Calu3 (cell line): ENCODE measurements at regions of chr10 and their contacts with region 1.

Region 1: GRCh38 chr10:111076191-111076681 is 593 bp upstream of the ADRA2A start:
- DNase-seq: peak; percentile 71
- H3K4me3 Mint-ChIP-seq: peak overlapping the region; percentile 88
- H3K27ac Mint-ChIP-seq: no peak overlapping the region
- H3K4me1 Mint-ChIP-seq: peaks cover 7% of the 10 kb centered on the region
- H3K27me3 Mint-ChIP-seq: peaks cover 37% of the 10 kb centered on the region
- CTCF ChIP-seq: peak; percentile 75

Region 2: DNA sequence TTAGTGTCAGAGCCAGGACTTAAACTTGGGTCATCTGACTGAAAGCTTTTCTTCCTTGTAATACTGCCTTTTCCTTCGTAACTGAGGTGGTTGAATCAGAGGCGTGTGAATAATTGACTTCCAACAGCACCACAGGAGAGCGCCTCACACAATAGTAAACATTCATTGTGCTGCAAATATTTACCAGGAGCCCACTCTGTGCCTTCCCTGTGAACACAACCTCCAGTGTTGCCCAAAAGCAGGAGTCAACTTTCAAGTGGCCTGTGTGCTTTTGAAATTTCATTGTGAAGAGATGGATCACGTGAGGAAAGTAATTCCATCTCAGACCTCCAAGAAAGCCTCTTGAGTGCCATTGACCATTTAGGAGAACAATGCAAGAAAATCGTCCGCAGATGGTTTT is 60.8 kb after region 1 on chr10:
- CTCF ChIA-PET with region 1: interaction called, 7 read pairs
- intact Hi-C with region 1: loop called (anchors 2 kb)
- DNase-seq: peak; percentile 36
- H3K4me3 Mint-ChIP-seq: peak overlapping the region; percentile 26
- H3K27ac Mint-ChIP-seq: peak overlapping the region; percentile 81
- H3K4me1 Mint-ChIP-seq: peaks cover 13% of the 10 kb centered on the region
- H3K27me3 Mint-ChIP-seq: no peaks in the 10 kb centered on the region
- CTCF ChIP-seq: no peak

Region 3: GRCh38 chr10:111265341-111265740 is 189.1 kb after region 1 on chr10:
- CTCF ChIA-PET with region 1: no interaction called
- intact Hi-C with region 1: loop called (anchors 1 kb)
- DNase-seq: no peak
- H3K4me3 Mint-ChIP-seq: no peak overlapping the region
- H3K27ac Mint-ChIP-seq: no peak overlapping the region
- H3K4me1 Mint-ChIP-seq: no peaks in the 10 kb centered on the region
- H3K27me3 Mint-ChIP-seq: peaks cover 13% of the 10 kb centered on the region
- CTCF ChIP-seq: no peak

Region 4: DNA sequence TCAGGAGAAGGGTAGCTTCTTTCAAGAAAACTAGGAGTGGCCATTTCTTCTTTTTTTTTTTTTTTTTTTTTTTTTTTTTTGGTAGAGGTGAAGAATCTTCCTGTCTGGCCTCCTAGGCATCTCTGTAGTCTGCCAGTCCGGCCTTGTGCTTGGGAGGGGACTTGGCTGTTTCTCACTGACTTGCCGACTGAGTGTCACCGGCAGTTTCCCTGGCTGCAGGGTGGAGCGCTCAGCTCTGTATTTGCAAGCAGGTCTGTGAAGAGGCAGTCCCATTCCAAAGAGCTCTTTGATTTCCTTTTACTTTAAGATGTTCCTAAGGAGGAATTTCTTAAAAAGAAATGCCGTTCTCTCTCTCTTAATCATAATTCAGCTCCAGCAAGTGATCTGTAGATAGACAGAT is 213.2 kb after region 1 on chr10:
- CTCF ChIA-PET with region 1: no interaction called
- intact Hi-C with region 1: no loop called
- DNase-seq: no peak
- H3K4me3 Mint-ChIP-seq: no peak overlapping the region
- H3K27ac Mint-ChIP-seq: no peak overlapping the region
- H3K4me1 Mint-ChIP-seq: no peaks in the 10 kb centered on the region
- H3K27me3 Mint-ChIP-seq: no peaks in the 10 kb centered on the region
- CTCF ChIP-seq: no peak

Region 5: DNA sequence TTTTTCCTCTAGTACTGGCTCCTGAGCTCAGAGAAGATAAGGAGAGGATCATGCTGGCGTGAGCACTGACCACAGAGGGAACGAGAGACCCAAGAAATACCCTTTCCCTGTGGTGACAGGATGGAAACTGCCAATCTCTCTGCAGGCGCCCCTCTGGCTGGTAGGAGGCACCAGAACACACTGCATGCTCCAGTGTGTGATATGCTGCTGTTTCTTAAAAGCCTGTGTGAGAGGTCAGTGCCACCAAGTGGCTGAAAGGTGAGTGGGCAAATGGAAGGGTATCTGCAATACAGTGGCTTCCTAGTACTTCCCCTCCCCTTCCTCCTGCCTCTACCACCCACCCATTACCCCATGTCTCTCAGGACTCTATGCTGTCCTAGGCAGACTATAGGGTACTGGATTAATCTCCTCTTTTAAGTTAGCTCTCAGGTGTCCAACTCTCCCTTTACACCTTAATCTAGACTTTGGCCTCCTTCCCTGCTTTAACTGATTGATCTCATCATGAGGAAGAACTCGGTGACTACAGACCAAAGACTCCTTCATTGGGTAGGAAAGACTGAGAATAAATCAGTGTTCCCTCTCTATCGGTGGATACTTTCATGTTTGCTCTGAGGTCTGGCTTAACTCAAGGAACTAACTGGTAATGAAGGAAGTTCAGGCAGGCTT is 284.2 kb after region 1 on chr10:
- CTCF ChIA-PET with region 1: no interaction called
- intact Hi-C with region 1: loop called (anchors 1 kb)
- DNase-seq: peak; percentile 59
- H3K4me3 Mint-ChIP-seq: no peak overlapping the region
- H3K27ac Mint-ChIP-seq: no peak overlapping the region
- H3K4me1 Mint-ChIP-seq: peaks cover 8% of the 10 kb centered on the region
- H3K27me3 Mint-ChIP-seq: no peaks in the 10 kb centered on the region
- CTCF ChIP-seq: peak; percentile 47

Region 6: DNA sequence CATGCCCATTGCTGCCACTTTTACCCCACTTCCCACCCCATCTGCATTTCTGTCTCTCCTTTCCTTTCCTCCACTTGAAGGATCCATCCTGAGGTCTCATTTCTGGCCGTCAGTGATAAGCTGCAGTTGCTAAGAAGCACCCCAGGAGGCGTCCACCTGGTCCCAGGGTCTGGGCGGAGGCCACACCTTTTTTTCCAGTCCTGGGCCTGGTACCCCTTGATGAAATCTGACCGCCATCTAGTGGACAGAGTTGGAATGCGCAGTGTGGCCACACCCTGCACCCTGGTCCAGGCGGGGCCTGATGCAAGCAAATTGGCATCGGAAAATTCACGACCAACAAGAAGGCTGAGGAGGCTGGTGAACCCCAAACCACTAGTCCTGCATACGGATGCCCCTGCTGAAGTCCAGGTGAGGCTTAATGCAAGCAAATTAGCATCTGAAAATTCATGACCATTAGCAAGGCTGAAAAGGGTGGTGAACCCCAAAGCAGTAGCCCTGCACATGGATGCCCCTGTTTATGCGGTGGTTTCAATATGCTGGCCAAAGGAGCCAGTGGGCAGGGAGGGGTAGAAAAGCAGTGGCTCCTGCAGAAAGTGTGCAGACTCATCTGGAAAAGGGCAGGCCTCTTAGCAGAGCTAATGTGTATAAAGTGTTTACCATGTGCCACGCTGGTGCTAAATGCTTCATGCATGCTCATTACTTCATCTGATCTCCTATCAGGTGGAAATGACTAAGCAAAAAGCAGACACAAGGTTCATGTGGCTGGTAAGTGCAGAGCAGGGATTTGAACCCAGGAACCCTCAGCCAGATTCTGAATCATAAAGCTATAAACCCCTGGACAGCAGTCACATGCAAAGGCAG is 1064.1 kb after region 1 on chr10:
- CTCF ChIA-PET with region 1: interaction called, 5 read pairs
- intact Hi-C with region 1: loop called (anchors 10 kb)
- DNase-seq: peak; percentile 85
- H3K4me3 Mint-ChIP-seq: no peak overlapping the region
- H3K27ac Mint-ChIP-seq: no peak overlapping the region
- H3K4me1 Mint-ChIP-seq: no peaks in the 10 kb centered on the region
- H3K27me3 Mint-ChIP-seq: peaks cover 21% of the 10 kb centered on the region
- CTCF ChIP-seq: peak; percentile 83